ENCODE measurements at regions of chr18 and their contacts with region 1.

Region 1: GRCh38 chr18:11040823-11041656 is 108.3 kb downstream of the PIEZO2 start:
- DNase-seq: peak; percentile 35
- ATAC-seq: no peak
- H3K4me3 Mint-ChIP-seq: no peak overlapping the region
- H3K27ac Mint-ChIP-seq: no peak overlapping the region
- H3K4me1 Mint-ChIP-seq: no peaks in the 10 kb centered on the region
- H3K27me3 Mint-ChIP-seq: peaks cover 5% of the 10 kb centered on the region
- CTCF ChIP-seq: peak; percentile 67

Region 2: DNA sequence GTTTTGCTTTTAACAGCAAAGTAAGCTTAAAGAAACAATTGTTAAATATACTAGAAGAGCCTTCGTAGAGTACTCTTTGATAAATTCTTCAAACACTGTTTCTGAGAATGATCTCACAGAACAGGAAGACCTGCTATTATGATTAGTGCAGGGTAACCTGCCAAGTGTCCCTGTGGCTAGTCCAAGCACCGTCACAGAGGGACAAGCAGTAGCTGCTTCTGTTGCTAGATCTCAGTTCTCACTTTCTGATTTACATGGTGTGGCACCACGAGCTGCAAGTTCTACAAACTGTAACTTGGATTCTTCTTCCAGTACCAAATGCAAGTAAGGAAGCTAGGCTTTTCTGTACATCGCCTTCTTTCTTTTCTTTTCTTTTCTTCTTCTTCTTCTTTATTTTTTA is 13.2 kb before region 1 on chr18:
- CTCF ChIA-PET with region 1: interaction called, 10 read pairs
- POLR2A ChIA-PET with region 1: no interaction called
- intact Hi-C with region 1: no loop called
- DNase-seq: no peak
- ATAC-seq: no peak
- H3K4me3 Mint-ChIP-seq: no peak overlapping the region
- H3K27ac Mint-ChIP-seq: no peak overlapping the region
- H3K4me1 Mint-ChIP-seq: no peaks in the 10 kb centered on the region
- H3K27me3 Mint-ChIP-seq: no peaks in the 10 kb centered on the region
- CTCF ChIP-seq: no peak

Region 3: DNA sequence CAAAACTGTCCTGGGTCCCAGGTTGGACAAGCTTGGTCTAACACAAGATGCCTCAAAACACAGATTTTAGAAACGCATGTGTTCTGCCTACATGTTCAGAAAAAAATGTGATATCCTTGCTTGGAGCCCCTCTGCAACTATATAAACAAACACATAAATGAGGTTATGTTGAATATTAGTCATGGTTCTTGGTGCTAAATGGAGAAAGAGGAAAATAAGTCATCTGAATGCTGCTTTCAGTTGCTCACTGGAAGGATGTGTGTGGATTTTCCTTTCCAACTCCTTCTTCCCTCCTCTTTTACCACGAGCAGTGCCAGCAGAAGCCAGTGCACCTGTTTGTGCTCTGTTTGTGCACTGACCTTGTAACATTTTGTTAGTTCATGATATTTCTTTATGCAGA is 23.1 kb after region 1 on chr18:
- CTCF ChIA-PET with region 1: no interaction called
- POLR2A ChIA-PET with region 1: no interaction called
- intact Hi-C with region 1: no loop called
- DNase-seq: no peak
- ATAC-seq: no peak
- H3K4me3 Mint-ChIP-seq: no peak overlapping the region
- H3K27ac Mint-ChIP-seq: no peak overlapping the region
- H3K4me1 Mint-ChIP-seq: no peaks in the 10 kb centered on the region
- H3K27me3 Mint-ChIP-seq: no peaks in the 10 kb centered on the region
- CTCF ChIP-seq: no peak